ENCODE measurements at regions of chr1 and their contacts with region 1.

Region 1: GRCh38 chr1:154546264-154547063 is 12.0 kb downstream of the UBE2Q1 start:
- DNase-seq: peak; percentile 72
- ATAC-seq: peak; percentile 98
- H3K4me3 Mint-ChIP-seq: no peak overlapping the region
- H3K27ac Mint-ChIP-seq: no peak overlapping the region
- H3K4me1 Mint-ChIP-seq: peaks cover 12% of the 10 kb centered on the region
- H3K27me3 Mint-ChIP-seq: no peaks in the 10 kb centered on the region
- CTCF ChIP-seq: peak; percentile 79

Region 2: DNA sequence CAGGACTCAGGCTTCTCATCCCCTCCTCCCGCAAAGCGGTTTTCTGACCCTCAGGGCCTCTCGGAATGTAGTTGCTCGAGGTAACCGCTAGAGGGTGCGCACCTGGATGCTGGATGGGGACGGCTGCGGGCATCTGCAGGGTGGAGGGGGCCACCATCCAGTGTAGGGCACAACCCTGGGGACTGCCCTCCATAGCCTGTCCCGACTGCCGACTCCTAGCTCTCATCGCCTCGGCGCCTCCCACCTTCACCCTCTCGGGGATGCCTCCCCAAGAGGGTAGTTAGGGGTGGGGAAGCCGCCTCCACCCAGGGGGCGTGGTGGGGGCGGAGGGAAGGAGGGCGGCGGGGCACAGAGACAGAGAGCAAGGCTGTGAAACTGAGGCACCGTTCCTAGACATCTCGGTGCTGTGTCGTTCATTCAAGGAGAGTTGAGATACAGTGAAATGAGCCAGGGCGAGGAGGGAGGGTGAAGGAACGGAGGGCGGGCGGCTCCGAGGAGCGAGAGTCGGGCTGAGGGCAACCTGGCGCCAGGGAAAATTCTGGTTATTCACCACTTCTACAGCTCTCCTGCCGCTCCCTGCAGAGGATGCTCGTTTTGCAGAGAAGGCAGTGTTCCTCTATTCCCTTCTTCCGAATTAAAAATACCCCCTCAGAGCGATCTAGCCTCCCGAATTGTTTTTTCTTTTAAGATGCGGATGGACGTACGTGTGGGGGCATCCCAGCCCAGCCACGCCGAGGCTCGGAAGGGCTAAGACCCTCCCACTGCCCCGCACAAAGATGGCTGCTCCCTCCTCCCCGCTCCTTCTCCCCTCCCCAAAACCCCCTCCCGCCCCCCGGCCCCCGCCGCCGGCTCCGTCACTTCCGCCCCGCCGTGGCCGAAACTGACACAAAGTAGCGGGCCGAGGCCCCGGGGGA is 221.5 kb before region 1 on chr1 and contains the start of gene ATP8B2:
- CTCF ChIA-PET with region 1: interaction called, 11 read pairs
- POLR2A ChIA-PET with region 1: no interaction called
- intact Hi-C with region 1: no loop called
- DNase-seq: peak; percentile 89
- ATAC-seq: peak; percentile 69
- H3K4me3 Mint-ChIP-seq: peak within 1 kb of the TSS; percentile 100
- H3K27ac Mint-ChIP-seq: peak within 1 kb of the TSS; percentile 96
- H3K4me1 Mint-ChIP-seq: peaks cover 39% of the 10 kb centered on the region
- H3K27me3 Mint-ChIP-seq: no peaks in the 10 kb centered on the region
- CTCF ChIP-seq: peak; percentile 96
- total RNA-seq, gene ATP8B2: 52.2 to 54.7 TPM

Region 3: DNA sequence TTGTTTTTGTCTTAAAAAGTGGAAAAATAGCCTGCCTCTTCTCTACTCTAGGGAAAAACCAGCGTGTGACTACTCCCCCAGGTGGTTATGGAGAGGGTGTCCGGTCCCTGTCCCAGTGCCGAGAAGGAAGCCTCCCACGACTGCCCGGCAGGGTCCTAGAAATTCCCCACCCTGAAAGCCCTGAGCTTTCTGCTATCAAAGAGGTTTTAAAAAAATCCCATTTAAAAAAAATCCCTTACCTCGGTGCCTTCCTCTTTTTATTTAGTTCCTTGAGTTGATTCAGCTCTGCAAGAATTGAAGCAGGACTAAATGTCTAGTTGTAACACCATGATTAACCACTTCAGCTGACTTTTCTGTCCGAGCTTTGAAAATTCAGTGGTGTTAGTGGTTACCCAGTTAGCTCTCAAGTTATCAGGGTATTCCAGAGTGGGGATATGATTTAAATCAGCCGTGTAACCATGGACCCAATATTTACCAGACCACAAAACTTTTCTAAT is 79.5 kb before region 1 on chr1:
- CTCF ChIA-PET with region 1: interaction called, 12 read pairs
- POLR2A ChIA-PET with region 1: no interaction called
- intact Hi-C with region 1: no loop called
- DNase-seq: no peak
- ATAC-seq: no peak
- H3K4me3 Mint-ChIP-seq: no peak overlapping the region
- H3K27ac Mint-ChIP-seq: no peak overlapping the region
- H3K4me1 Mint-ChIP-seq: peaks cover 40% of the 10 kb centered on the region
- H3K27me3 Mint-ChIP-seq: no peaks in the 10 kb centered on the region
- CTCF ChIP-seq: no peak

Region 4: DNA sequence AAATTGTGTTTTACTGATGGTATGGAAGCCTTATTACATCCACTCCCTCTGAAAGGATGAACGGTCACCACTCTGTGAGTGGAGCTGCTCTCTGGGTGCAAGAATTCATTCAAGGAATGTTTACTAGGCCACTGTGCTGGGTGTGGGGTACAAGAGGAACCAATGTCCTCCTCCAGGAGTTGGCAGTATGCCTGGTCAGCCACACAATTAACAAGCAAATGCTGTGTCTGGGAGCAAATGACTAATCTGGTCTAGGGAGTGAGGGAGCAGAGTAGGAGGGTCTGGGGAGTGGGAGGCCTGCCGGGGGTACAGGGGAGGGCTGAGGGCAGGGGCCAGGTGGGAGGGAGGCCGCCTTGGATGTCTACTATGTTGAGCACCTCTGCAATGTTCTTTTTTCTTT is 71.7 kb before region 1 on chr1:
- CTCF ChIA-PET with region 1: interaction called, 127 read pairs
- POLR2A ChIA-PET with region 1: interaction called, 3 read pairs
- intact Hi-C with region 1: loop called (anchors 2 kb)
- DNase-seq: no peak
- ATAC-seq: no peak
- H3K4me3 Mint-ChIP-seq: no peak overlapping the region
- H3K27ac Mint-ChIP-seq: no peak overlapping the region
- H3K4me1 Mint-ChIP-seq: peaks cover 15% of the 10 kb centered on the region
- H3K27me3 Mint-ChIP-seq: no peaks in the 10 kb centered on the region
- CTCF ChIP-seq: no peak

Region 5: GRCh38 chr1:154493276-154493675 is 53.2 kb before region 1 on chr1:
- CTCF ChIA-PET with region 1: interaction called, 14 read pairs
- POLR2A ChIA-PET with region 1: interaction called, 3 read pairs
- intact Hi-C with region 1: no loop called
- DNase-seq: peak; percentile 20
- ATAC-seq: peak; percentile 27
- H3K4me3 Mint-ChIP-seq: no peak overlapping the region
- H3K27ac Mint-ChIP-seq: no peak overlapping the region
- H3K4me1 Mint-ChIP-seq: peaks cover 39% of the 10 kb centered on the region
- H3K27me3 Mint-ChIP-seq: peaks cover 5% of the 10 kb centered on the region
- CTCF ChIP-seq: no peak

Region 6: GRCh38 chr1:154533952-154534844 is 12.3 kb before region 1 on chr1:
- CTCF ChIA-PET with region 1: interaction called, 22 read pairs
- POLR2A ChIA-PET with region 1: interaction called, 3 read pairs
- intact Hi-C with region 1: no loop called
- DNase-seq: no peak
- ATAC-seq: no peak
- H3K4me3 Mint-ChIP-seq: no peak overlapping the region
- H3K27ac Mint-ChIP-seq: no peak overlapping the region
- H3K4me1 Mint-ChIP-seq: no peaks in the 10 kb centered on the region
- H3K27me3 Mint-ChIP-seq: peaks cover 5% of the 10 kb centered on the region
- CTCF ChIP-seq: no peak